Breast epithelium (tissue), 4 donors: ENCODE measurements at regions of chr12 and their contacts with region 1.

Region 1: GRCh38 chr12:29429999-29430698 is 49.2 kb upstream of the ERGIC2 start:
- DNase-seq: no peak
- H3K4me3 ChIP-seq: no peak overlapping the region
- H3K27ac ChIP-seq: no peak overlapping the region
- H3K4me1 ChIP-seq: no peaks in the 10 kb centered on the region
- H3K27me3 ChIP-seq: no peaks in the 10 kb centered on the region
- CTCF ChIP-seq: no peak
- POLR2A ChIP-seq: no peak

Region 2: GRCh38 chr12:27467641-27468040 is 1962.5 kb before region 1 on chr12:
- intact Hi-C with region 1: loop called (anchors 5 kb)
- DNase-seq: no peak
- H3K4me3 ChIP-seq: no peak overlapping the region
- H3K27ac ChIP-seq: no peak overlapping the region
- H3K4me1 ChIP-seq: peaks cover 0 to 4% of the 10 kb centered on the region in 2 donors
- H3K27me3 ChIP-seq: no peaks in the 10 kb centered on the region
- CTCF ChIP-seq: no peak
- POLR2A ChIP-seq: no peak

Region 3: DNA sequence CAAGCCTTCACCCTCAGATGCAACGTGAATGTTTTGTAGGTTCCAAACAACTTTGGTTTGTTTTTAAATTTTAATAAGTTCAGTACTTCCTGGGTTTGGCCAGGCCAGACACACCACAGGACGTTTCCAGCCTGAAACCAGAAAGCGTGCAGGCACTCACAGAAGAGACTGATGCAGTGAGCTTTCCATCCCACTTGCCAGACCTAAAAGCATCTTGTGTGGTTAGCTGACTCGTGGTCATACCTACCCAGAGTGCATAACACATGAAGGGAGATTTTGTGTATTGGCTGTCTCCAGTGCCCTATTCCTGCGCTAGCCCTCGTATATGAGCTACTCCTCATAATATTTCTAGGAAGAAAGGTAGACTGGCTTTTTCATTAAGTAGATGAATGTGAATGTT is 578.4 kb before region 1 on chr12:
- intact Hi-C with region 1: no loop called
- DNase-seq: no peak
- H3K4me3 ChIP-seq: no peak overlapping the region
- H3K27ac ChIP-seq: no peak overlapping the region
- H3K4me1 ChIP-seq: no peaks in the 10 kb centered on the region
- H3K27me3 ChIP-seq: no peaks in the 10 kb centered on the region
- CTCF ChIP-seq: no peak
- POLR2A ChIP-seq: no peak

Region 4: DNA sequence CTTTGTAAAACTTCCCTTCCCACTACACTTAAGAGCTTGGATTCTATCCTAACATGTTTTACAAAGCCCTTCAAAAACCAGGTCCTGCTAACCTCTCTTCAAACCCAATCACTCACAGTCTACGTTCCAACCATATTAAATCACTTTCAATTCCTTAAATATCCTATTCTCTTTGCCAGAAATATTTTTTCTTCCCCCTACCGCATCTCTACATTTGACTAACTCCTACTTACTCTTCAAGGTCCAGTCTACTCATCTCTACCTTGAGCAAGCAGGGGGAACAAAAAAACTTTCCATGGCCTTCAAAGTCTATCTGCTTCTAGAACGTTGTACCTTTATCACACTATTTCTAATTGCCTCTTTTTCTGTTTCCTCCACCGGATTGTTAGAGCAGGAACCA is 55.2 kb before region 1 on chr12:
- intact Hi-C with region 1: no loop called
- DNase-seq: no peak
- H3K4me3 ChIP-seq: no peak overlapping the region
- H3K27ac ChIP-seq: no peak overlapping the region
- H3K4me1 ChIP-seq: no peaks in the 10 kb centered on the region
- H3K27me3 ChIP-seq: no peaks in the 10 kb centered on the region
- CTCF ChIP-seq: no peak
- POLR2A ChIP-seq: no peak

Region 5: DNA sequence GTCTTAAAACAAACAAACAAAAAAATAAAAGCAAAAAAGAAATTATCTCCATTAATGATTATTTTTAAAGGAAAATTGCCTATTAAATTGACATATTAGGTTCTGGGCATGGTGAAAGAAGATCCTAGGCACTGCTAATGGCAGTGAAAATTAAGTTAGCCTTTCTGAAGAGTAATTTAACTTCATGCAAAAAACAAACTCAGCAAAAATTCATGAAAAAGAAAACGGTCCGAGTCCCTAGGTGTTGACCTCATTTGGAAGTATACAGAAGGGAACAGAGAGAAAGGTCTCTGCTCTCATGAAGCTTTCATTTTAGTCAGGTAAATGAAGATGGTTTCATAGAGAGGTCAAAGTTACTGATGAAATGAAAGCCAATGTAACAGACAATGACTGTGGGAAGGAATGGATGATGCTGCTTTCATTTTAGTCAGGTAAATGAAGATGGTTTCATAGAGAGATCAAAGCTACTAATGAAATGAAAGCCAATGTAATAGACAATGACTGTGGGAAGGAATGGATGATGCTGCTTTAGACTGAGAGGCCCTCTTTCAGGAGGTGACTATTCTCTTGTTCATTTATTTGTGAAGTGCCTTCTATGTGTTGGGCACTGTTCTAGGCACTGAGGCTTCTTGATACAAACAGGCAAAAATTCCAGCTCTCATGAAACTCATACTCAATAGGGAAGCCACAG is 17.3 kb after region 1 on chr12:
- intact Hi-C with region 1: no loop called
- DNase-seq: no peak
- H3K4me3 ChIP-seq: no peak overlapping the region
- H3K27ac ChIP-seq: no peak overlapping the region
- H3K4me1 ChIP-seq: no peaks in the 10 kb centered on the region
- H3K27me3 ChIP-seq: no peaks in the 10 kb centered on the region
- CTCF ChIP-seq: no peak
- POLR2A ChIP-seq: no peak